Heart right ventricle (tissue), 16 donors: ENCODE measurements at regions of chr5 and their contacts with region 1.

Region 1: GRCh38 chr5:5492087-5492933 is 69.8 kb downstream of the ICE1 start:
- DNase-seq: peak in 1 of 2 donors; percentile 28
- ATAC-seq: peak in 4 of 8 donors; percentile 23 to 47 (median 43)
- H3K4me3 ChIP-seq: no peak overlapping the region
- H3K27ac ChIP-seq: no peak overlapping the region
- H3K4me1 ChIP-seq: peaks cover 0 to 26% (median 10%) of the 10 kb centered on the region in 9 donors
- H3K27me3 ChIP-seq: peaks cover 0 to 29% (median 0%) of the 10 kb centered on the region in 7 donors
- CTCF ChIP-seq: peak; percentile 50 to 79 (median 72)

Region 2: DNA sequence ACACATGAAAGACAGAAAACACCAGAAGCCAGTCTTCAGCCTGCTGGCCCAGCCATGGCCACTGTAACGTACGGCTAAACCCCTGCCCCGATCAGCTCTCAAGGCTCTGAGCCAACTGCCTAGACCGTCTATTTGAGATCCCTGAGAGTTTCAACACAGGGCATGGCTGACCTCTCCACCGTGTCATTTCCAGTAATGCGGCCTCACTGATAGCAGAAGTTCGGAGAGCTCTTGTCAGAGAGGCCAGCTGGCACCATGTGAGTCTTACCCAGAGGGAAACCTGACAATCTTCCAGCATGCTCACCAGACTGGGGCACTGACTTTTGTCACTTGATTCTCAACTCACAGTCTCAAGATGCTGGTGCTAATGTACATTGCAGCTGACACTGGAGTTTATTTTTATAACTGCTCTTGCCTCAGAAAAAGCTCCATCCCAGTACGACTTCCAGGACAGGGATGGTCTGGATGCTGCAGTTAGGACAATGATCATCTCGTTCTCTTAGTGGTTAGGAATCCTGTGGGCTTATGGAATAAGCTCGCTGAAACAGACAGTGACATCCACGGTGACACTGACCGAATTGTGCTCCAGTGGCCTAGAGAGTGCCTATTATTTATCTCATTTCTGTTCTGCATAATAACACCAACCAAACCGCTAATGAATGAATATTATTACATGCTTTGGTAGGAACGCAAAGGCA is 302.9 kb after region 1 on chr5:
- intact Hi-C with region 1: loop called in 1 of 10 experiments (anchors 10 kb)
- DNase-seq: peak; percentile 41 to 74
- ATAC-seq: peak; percentile 89 to 99 (median 96)
- H3K4me3 ChIP-seq: no peak overlapping the region
- H3K27ac ChIP-seq: peak overlapping the region in 8 of 10 donors; percentile 22 to 80 (median 54)
- H3K4me1 ChIP-seq: peaks cover 0 to 38% (median 3%) of the 10 kb centered on the region in 9 donors
- H3K27me3 ChIP-seq: no peaks in the 10 kb centered on the region
- CTCF ChIP-seq: no peak

Region 3: GRCh38 chr5:5886812-5887486 is 394.6 kb after region 1 on chr5:
- intact Hi-C with region 1: loop called in 8 of 10 experiments (anchors 5 to 10 kb)
- DNase-seq: peak in 1 of 2 donors; percentile 17
- ATAC-seq: peak in 5 of 8 donors; percentile 20 to 80 (median 44)
- H3K4me3 ChIP-seq: no peak overlapping the region
- H3K27ac ChIP-seq: no peak overlapping the region
- H3K4me1 ChIP-seq: peaks cover 0 to 5% (median 0%) of the 10 kb centered on the region in 9 donors
- H3K27me3 ChIP-seq: peaks cover 0 to 20% (median 5%) of the 10 kb centered on the region in 7 donors
- CTCF ChIP-seq: peak; percentile 11 to 63 (median 56)

Region 4: DNA sequence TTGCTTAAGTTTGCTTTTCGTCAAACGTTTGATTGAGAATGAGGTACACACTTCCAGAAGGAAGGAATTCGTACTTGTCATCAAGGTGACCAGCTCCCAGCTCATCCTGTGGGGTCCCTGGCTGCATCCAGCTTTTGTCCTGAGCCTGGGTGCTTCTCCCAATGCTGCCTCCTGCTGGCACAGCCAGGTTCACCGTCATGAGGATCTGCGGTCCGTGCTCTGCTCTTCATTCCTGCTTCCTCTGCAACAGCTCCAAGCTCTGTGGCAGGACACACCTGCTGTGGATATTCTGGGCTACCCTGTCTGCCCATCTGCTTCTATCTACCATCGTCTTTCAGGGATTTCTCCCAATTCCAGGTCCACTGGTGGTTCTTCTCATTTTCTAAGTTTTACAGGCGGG is 943.0 kb after region 1 on chr5:
- intact Hi-C with region 1: loop called in 1 of 10 experiments (anchors 10 kb)
- DNase-seq: no peak
- ATAC-seq: no peak
- H3K4me3 ChIP-seq: no peak overlapping the region
- H3K27ac ChIP-seq: no peak overlapping the region
- H3K4me1 ChIP-seq: peaks cover 0 to 21% (median 6%) of the 10 kb centered on the region in 9 donors
- H3K27me3 ChIP-seq: peaks cover 0 to 15% (median 0%) of the 10 kb centered on the region in 7 donors
- CTCF ChIP-seq: peak in 7 of 9 donors; percentile 20 to 46 (median 34)

Region 5: DNA sequence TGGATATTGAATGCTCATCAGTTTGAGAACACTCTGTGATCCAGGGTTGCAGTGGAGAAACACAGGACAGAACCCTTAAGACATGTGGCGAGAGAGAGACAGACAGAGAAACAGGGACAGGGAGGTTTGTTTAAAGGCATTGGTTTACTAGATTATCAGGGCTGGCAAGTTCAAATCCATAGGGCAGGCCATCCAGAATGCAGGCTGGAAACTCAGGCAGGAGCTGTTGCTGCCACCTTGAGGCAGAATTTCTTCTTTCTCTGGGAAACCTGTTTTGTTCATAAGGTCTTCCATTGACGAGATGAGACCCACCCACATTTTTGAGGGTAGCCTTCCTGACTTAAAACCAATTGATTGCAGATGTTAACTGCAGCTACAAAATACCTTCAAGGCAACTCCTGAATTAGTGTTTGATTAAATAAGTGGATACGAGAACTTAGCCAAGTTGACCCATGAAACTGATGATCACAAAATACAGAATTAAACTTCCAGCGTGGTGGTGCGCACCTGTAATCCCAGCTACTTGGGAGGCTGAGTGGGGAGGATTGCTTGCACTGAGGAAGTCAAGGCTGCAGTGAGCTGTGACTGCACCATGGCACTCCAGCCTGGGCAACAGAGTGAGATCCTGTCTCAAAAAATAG is 1084.7 kb after region 1 on chr5:
- intact Hi-C with region 1: loop called in 6 of 10 experiments (anchors 5 to 10 kb)
- DNase-seq: no peak
- ATAC-seq: peak in 7 of 8 donors; percentile 28 to 46 (median 32)
- H3K4me3 ChIP-seq: no peak overlapping the region
- H3K27ac ChIP-seq: no peak overlapping the region
- H3K4me1 ChIP-seq: peaks cover 0 to 18% (median 4%) of the 10 kb centered on the region in 9 donors
- H3K27me3 ChIP-seq: peaks cover 0 to 16% (median 0%) of the 10 kb centered on the region in 7 donors
- CTCF ChIP-seq: peak in 8 of 9 donors; percentile 20 to 62 (median 57)

Region 6: DNA sequence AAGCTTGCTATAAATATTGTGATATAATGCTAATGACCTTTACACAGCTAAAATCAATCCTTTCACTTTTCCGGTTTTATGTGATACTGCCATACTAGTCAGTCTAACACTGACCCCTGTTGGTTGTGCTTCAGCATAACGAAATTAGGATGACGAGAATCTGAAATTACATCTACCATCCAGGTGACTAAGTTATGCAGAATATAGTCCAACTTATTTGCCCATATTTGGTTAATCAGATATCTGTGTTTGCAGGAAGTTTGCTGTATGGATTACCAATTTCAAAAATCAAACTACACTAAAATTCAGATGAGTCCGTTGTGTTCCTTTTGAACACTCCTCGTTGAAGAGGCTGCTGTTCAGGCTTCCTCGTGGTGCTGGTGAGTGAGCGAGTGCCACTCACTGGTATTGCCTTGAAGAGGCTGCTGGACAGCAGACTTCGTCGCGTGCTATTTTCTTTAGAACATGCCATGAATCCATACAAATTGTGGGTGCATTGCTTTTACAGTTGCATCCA is 1253.5 kb after region 1 on chr5:
- intact Hi-C with region 1: loop called in 3 of 10 experiments (anchors 5 to 10 kb)
- DNase-seq: no peak
- ATAC-seq: peak; percentile 41 to 82 (median 64)
- H3K4me3 ChIP-seq: no peak overlapping the region
- H3K27ac ChIP-seq: peak overlapping the region in 3 of 10 donors; percentile 45 to 58 (median 49)
- H3K4me1 ChIP-seq: peaks cover 0 to 14% (median 8%) of the 10 kb centered on the region in 9 donors
- H3K27me3 ChIP-seq: no peaks in the 10 kb centered on the region
- CTCF ChIP-seq: peak; percentile 69 to 85 (median 81)